K562 (cell line): ENCODE measurements at regions of chr10 and their contacts with region 1.

Region 1: DNA sequence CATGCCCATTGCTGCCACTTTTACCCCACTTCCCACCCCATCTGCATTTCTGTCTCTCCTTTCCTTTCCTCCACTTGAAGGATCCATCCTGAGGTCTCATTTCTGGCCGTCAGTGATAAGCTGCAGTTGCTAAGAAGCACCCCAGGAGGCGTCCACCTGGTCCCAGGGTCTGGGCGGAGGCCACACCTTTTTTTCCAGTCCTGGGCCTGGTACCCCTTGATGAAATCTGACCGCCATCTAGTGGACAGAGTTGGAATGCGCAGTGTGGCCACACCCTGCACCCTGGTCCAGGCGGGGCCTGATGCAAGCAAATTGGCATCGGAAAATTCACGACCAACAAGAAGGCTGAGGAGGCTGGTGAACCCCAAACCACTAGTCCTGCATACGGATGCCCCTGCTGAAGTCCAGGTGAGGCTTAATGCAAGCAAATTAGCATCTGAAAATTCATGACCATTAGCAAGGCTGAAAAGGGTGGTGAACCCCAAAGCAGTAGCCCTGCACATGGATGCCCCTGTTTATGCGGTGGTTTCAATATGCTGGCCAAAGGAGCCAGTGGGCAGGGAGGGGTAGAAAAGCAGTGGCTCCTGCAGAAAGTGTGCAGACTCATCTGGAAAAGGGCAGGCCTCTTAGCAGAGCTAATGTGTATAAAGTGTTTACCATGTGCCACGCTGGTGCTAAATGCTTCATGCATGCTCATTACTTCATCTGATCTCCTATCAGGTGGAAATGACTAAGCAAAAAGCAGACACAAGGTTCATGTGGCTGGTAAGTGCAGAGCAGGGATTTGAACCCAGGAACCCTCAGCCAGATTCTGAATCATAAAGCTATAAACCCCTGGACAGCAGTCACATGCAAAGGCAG is 43.2 kb downstream of the GPAM start:
- DNase-seq: peak; percentile 84 to 88 (median 86)
- ATAC-seq: peak; percentile 99
- H3K4me3 ChIP-seq: no peak overlapping the region
- H3K27ac ChIP-seq: no peak overlapping the region
- H3K4me1 ChIP-seq: no peaks in the 10 kb centered on the region; a peak in 2 of 5 replicates
- H3K27me3 ChIP-seq: peaks cover 0 to 16% of the 10 kb centered on the region in 2 experiments; a peak in 2 of 5 replicates
- CTCF ChIP-seq: peak; percentile 91 to 94 (median 93)
- EP300 ChIP-seq: no peak
- POLR2A ChIP-seq: no peak
- RAD21 ChIP-seq: peak; percentile 42 to 71

Region 2: DNA sequence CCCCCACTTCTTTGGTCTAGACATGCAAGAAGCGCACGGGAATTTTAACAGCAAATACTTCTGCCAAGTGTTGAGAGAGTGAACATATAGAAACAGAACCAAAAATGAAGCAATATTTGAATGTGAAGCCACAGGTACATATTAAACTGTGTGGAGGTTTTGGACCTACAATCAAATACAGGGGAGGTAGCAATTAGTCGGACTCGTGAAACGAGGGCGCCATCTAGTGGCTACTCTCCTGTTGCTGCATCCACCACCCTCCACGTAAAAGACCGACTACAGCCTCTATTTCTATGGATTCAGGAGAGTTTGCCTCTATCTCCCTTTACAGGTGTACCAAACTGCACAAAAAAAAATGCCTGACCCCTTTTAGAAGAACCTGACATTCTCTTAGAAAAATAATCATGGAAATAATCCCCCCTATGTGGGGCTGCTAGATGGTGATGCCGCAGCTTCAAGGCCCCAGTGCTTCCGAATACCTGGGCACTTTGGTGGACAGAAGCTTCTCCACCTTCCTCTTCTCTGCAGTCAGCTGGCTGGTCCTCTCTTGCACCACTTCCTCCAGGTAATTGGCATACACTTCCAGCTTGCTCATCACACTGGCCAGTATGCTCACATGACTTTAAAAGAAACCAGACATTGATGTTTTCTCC is 174.6 kb after region 1 on chr10:
- CTCF ChIA-PET with region 1: interaction called, 4 read pairs
- POLR2A ChIA-PET with region 1: no interaction called
- in situ Hi-C with region 1: loop called (anchors 10 kb)
- intact Hi-C with region 1: loop called (anchors 10 kb)
- DNase-seq: peak; percentile 60 to 74 (median 65)
- ATAC-seq: peak; percentile 96
- H3K4me3 ChIP-seq: no peak overlapping the region
- H3K27ac ChIP-seq: no peak overlapping the region
- H3K4me1 ChIP-seq: peaks cover 0 to 3% of the 10 kb centered on the region in 2 experiments; a peak in 1 of 5 replicates
- H3K27me3 ChIP-seq: peaks cover 8 to 19% of the 10 kb centered on the region in 2 experiments
- CTCF ChIP-seq: peak; percentile 65 to 81 (median 73)
- EP300 ChIP-seq: no peak
- POLR2A ChIP-seq: no peak
- RAD21 ChIP-seq: peak; percentile 55 to 78

Region 3: GRCh38 chr10:112434988-112435619 is 294.8 kb after region 1 on chr10:
- CTCF ChIA-PET with region 1: interaction called, 11 read pairs
- POLR2A ChIA-PET with region 1: no interaction called
- in situ Hi-C with region 1: no loop called
- intact Hi-C with region 1: no loop called
- DNase-seq: peak in 1 of 4 experiments; percentile 24
- ATAC-seq: no peak
- H3K4me3 ChIP-seq: no peak overlapping the region
- H3K27ac ChIP-seq: no peak overlapping the region
- H3K4me1 ChIP-seq: no peaks in the 10 kb centered on the region
- H3K27me3 ChIP-seq: no peaks in the 10 kb centered on the region
- CTCF ChIP-seq: peak in 1 of 3 experiments; percentile 60; a peak in 2 of 6 replicates
- EP300 ChIP-seq: no peak
- POLR2A ChIP-seq: no peak
- RAD21 ChIP-seq: peak; percentile 68 to 69